ENCODE measurements at regions of chr2 and their contacts with region 1.

Region 1: GRCh38 chr2:222903234-222904220 is 42.7 kb downstream of the ACSL3 start:
- DNase-seq: peak; percentile 66
- CTCF ChIP-seq: peak; percentile 64

Region 2: GRCh38 chr2:222797261-222797660 is 106.3 kb before region 1 on chr2:
- CTCF ChIA-PET with region 1: interaction called, 12 read pairs
- POLR2A ChIA-PET with region 1: no interaction called
- DNase-seq: peak; percentile 31
- CTCF ChIP-seq: peak; percentile 41

Region 3: GRCh38 chr2:222860740-222861410 is 42.7 kb before region 1 on chr2 and contains the start of gene ACSL3:
- CTCF ChIA-PET with region 1: interaction called, 13 read pairs
- POLR2A ChIA-PET with region 1: no interaction called
- DNase-seq: peak; percentile 97
- CTCF ChIP-seq: no peak

Region 4: GRCh38 chr2:222892321-222892720 is 11.2 kb before region 1 on chr2:
- CTCF ChIA-PET with region 1: interaction called, 26 read pairs
- POLR2A ChIA-PET with region 1: no interaction called
- DNase-seq: no peak
- CTCF ChIP-seq: no peak